Sigmoid colon (tissue), 7 donors: ENCODE measurements at regions of chr4 and their contacts with region 1.

Region 1: DNA sequence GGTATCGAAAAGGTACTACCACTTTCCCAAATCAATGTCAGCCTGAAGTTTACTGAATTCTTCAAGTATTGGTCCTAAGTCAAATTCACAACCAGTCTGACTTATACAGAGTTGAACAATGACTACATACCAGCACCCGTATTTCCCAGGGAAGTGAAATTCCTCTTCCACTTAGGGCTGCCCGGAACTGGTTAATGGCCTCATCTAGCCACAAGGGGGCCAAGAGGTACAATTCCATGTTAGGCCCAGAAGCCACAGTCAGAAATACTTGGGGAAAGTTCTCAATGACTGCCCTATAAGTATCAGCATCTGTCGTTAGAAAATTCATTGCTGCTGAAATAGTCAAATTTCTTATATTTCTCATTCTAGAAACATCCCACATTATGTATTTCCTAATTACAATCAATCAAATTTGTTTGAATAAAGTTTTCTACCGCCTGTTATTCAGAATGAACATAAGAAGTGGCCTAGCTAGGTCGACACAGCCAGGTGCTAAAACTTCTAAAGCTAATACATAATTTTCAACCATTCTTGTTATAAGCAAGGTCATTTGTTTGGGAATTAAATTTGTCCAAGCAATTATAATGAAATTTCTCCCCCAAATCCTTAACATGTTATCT is 5.7 kb upstream of the PCDH7 start:
- DNase-seq: no peak
- H3K4me3 ChIP-seq: no peak overlapping the region
- H3K27ac ChIP-seq: no peak overlapping the region
- H3K4me1 ChIP-seq: peaks cover 0 to 10% (median 5%) of the 10 kb centered on the region in 4 donors
- H3K27me3 ChIP-seq: no peaks in the 10 kb centered on the region
- CTCF ChIP-seq: peak; percentile 55 to 73 (median 65)
- EP300 ChIP-seq: no peak
- POLR2A ChIP-seq: no peak

Region 2: DNA sequence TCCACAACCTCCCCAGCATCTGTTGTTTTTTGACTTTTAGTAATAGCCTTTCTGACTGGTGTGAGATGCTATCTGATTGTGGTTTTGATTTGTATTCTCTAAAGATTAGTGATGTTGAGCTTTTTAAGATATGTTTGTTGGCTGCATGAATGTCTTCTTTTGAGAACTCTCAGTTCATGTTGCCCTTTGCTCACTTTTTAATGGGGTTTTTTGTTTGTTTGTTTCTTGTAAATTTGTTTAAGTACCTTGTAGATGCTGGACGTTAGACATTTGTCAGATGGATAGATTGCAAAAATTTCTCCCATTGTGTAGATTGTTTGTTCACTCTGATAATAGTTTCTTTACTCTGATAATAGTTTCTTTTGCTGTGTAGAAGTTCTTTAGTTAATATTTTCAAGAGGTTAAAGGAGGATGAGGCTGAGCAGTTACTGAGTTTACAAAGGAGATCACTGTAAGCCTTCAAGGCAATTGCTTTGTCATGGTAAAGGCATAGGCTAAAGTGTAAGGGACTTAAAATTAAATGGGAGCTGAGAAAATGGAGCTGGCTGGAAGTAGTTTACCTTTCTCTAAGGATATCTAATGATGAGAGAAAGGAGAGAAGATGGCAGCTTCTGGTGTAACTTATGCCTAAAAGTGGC is 329.0 kb after region 1 on chr4:
- intact Hi-C with region 1: no loop called
- DNase-seq: no peak
- H3K4me3 ChIP-seq: no peak overlapping the region
- H3K27ac ChIP-seq: no peak overlapping the region
- H3K4me1 ChIP-seq: no peaks in the 10 kb centered on the region
- H3K27me3 ChIP-seq: no peaks in the 10 kb centered on the region
- CTCF ChIP-seq: no peak
- EP300 ChIP-seq: no peak
- POLR2A ChIP-seq: no peak

Region 3: GRCh38 chr4:31146366-31146765 is 431.8 kb after region 1 on chr4:
- intact Hi-C with region 1: loop called (anchors 10 kb)
- DNase-seq: no peak
- H3K4me3 ChIP-seq: no peak overlapping the region
- H3K27ac ChIP-seq: no peak overlapping the region
- H3K4me1 ChIP-seq: no peaks in the 10 kb centered on the region
- H3K27me3 ChIP-seq: no peaks in the 10 kb centered on the region
- CTCF ChIP-seq: no peak
- EP300 ChIP-seq: no peak
- POLR2A ChIP-seq: no peak

Region 4: GRCh38 chr4:31349907-31350306 is 635.4 kb after region 1 on chr4:
- intact Hi-C with region 1: loop called (anchors 10 kb)
- DNase-seq: no peak
- H3K4me3 ChIP-seq: no peak overlapping the region
- H3K27ac ChIP-seq: no peak overlapping the region
- H3K4me1 ChIP-seq: no peaks in the 10 kb centered on the region
- H3K27me3 ChIP-seq: no peaks in the 10 kb centered on the region
- CTCF ChIP-seq: no peak
- EP300 ChIP-seq: no peak
- POLR2A ChIP-seq: no peak